GM10248 (cell line): ENCODE measurements at regions of chr2 and their contacts with region 1.

Region 1: GRCh38 chr2:234544659-234545611 is 48.1 kb upstream of the ARL4C start:
- DNase-seq: peak; percentile 78
- CTCF ChIP-seq: peak; percentile 82

Region 2: DNA sequence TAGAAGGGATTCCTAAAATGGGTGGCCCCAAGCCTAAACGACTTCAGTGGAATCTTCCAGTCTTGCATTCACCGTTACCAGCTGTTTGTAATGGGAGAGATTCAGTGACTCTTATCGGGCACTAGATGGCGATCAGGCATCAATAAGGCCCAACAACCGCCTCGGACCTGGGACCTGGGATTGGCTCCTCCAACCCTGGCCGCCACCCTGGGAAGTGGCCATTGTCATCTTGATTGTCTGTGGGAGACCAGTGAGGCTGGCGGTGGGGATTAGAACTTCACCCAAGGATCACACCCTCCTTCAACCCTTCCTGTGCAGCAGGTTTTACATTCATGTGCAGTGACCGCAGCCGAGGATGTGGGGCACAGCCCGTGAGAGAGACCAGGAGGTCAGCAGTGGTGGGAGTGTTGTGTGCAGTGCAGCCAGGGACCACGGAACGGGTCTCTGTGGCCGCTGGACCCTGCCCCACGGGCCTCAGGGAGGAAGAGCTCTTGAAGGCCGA is 409.2 kb before region 1 on chr2:
- CTCF ChIA-PET with region 1: interaction called, 30 read pairs
- POLR2A ChIA-PET with region 1: no interaction called
- DNase-seq: peak; percentile 68
- CTCF ChIP-seq: peak; percentile 65

Region 3: DNA sequence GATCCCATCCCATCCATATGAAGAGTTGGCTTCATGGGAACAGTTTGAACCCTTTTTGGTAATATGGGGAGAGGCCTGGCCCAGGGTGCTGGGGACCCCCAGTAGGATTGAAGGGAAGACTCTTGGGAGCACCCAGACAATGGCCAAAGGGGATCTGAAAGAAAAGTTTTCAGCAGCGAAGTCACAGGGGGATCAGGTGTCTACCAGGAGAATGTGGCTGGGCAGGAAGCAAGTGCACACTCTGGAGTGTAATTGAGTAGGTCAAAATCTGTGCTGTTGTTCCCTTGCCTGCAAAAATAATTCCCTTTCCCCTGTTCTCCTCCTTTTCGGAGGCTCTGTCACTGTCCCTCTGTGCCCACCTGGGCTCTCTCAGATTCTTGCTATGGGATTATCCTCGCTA is 105.2 kb before region 1 on chr2:
- CTCF ChIA-PET with region 1: no interaction called
- POLR2A ChIA-PET with region 1: no interaction called
- DNase-seq: no peak
- CTCF ChIP-seq: no peak

Region 4: GRCh38 chr2:234533626-234534025 is 11.3 kb before region 1 on chr2:
- CTCF ChIA-PET with region 1: interaction called, 38 read pairs
- POLR2A ChIA-PET with region 1: no interaction called
- DNase-seq: no peak
- CTCF ChIP-seq: no peak

Region 5: GRCh38 chr2:234561349-234561748 is 16.4 kb after region 1 on chr2:
- CTCF ChIA-PET with region 1: interaction called, 10 read pairs
- POLR2A ChIA-PET with region 1: no interaction called
- DNase-seq: no peak
- CTCF ChIP-seq: no peak

Region 6: DNA sequence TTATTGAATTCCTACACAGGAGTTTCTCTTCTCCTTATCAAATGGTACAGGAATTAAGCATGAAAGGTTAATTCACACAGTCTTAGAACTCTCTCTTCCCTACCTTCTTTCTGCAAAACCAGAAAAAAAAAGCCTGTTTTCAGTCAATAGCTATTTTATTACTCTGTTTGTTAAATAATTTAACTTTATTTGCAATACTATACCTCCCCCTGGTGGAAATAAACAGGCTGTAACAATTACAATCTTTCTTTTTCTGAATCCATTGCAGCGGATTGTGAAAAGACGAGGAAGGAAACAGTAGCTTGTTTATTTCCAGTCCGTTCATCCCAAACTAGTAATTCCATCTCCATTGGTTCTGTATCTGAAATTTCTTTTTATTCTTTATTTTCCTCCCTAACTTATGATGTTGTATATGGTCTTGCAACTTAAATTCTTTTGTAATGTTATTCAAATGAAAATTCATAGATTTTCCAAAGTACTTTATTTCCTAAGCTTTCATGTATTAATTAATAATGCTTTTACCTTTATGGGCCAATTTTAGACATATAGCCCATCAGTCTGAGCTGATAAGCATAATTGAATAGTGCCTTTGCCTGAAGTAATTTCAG is 572.1 kb after region 1 on chr2:
- CTCF ChIA-PET with region 1: interaction called, 33 read pairs
- POLR2A ChIA-PET with region 1: no interaction called
- DNase-seq: no peak
- CTCF ChIP-seq: peak; percentile 30